ENCODE measurements at regions of chr4 and their contacts with region 1.

Region 1: GRCh38 chr4:158768555-158769174 is at the start of gene FNIP2:
- DNase-seq: peak; percentile 92
- H3K4me3 ChIP-seq: peak within 1 kb of the TSS; percentile 83 to 91 (median 90)
- H3K27ac ChIP-seq: peak within 1 kb of the TSS; percentile 90 to 93 (median 92)
- H3K4me1 ChIP-seq: peaks cover 0 to 44% (median 25%) of the 10 kb centered on the region in 4 donors
- H3K27me3 ChIP-seq: no peaks in the 10 kb centered on the region
- CTCF ChIP-seq: no peak
- EP300 ChIP-seq: no peak
- POLR2A ChIP-seq: peak in 1 of 2 donors; percentile 17
- total RNA-seq, gene FNIP2: 35.2 to 38.9 (median 36.5) TPM

Region 2: DNA sequence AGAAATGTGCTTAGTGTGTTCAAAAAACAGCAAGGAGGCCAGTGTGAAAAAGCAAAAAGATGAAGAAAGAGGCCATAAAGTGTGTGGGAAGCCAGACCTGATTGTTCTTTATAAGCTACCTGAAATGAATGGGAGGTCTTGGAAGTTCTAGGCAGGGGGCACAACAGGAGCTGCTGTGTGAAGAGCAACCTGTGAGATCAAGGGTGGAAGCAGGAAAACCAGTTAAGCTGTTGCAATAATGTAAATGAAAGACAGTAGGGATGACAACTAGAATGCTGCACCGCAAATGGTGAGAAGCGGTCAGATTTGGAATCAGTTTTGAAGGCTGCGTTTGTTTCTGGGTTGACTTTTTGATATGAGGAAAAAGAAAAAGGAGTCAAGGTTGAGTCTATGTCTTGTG is 434.8 kb before region 1 on chr4:
- intact Hi-C with region 1: no loop called
- DNase-seq: no peak
- H3K4me3 ChIP-seq: no peak overlapping the region
- H3K27ac ChIP-seq: no peak overlapping the region
- H3K4me1 ChIP-seq: no peaks in the 10 kb centered on the region
- H3K27me3 ChIP-seq: no peaks in the 10 kb centered on the region
- CTCF ChIP-seq: no peak
- EP300 ChIP-seq: no peak
- POLR2A ChIP-seq: no peak

Region 3: DNA sequence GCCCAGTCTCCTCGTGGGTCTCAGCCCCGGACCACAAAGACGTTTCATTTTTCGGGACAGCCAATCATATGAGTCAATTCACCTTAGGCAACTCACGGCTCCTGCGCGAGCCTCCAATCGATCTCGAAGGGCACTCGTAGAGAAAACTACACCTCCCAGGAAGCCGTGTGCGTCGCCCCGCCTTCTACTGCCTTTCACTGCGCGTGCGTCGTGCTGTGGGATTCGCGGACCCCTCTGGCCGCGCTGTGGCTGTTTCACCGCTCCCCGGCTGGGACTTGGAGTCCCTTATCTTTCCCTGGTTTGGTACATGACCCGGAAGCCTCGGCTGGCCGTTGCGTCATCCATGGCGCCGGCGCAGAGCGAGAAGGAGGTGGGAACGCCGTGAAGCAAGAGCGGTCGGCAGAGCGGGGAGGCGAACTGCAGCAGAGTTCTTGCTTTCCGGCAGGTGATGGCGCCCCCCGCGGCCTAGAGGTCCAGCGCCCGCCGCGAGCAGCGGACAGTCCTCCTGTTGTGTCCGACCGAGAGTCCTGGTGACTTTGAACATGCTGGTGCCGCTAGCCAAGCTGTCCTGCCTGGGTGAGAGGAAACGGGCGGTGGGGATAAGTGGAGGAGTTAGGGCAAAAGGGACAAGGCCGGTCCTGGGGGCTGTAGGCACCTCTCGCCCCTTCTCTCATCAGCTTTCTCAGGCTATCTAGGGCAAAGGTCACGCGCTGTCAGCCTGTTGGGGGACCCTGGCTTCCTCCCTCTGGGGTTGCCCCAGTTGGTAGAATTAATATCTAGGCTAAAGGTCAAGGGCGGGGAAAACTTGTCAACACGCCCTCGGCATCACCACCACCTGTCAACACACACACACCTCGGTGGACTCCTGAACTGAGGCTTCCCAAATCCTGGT is 96.5 kb before region 1 on chr4 and contains the start of gene ETFDH:
- intact Hi-C with region 1: loop called (anchors 5 kb)
- DNase-seq: peak; percentile 100
- H3K4me3 ChIP-seq: peak within 1 kb of the TSS; percentile 71 to 90 (median 84)
- H3K27ac ChIP-seq: peak within 1 kb of the TSS; percentile 88 to 99 (median 96)
- H3K4me1 ChIP-seq: peaks cover 0 to 29% (median 24%) of the 10 kb centered on the region in 4 donors
- H3K27me3 ChIP-seq: no peaks in the 10 kb centered on the region
- CTCF ChIP-seq: peak; percentile 39 to 71 (median 58)
- EP300 ChIP-seq: peak in 1 of 4 donors; percentile 82
- POLR2A ChIP-seq: peak; percentile 43 to 70
- total RNA-seq, gene ETFDH: 30.7 to 49.9 (median 37.7) TPM

Region 4: GRCh38 chr4:158722917-158723793 is 45.5 kb before region 1 on chr4 and contains the start of gene PPID:
- intact Hi-C with region 1: loop called (anchors 2 kb)
- DNase-seq: peak; percentile 88
- H3K4me3 ChIP-seq: peak within 1 kb of the TSS; percentile 61 to 85 (median 72)
- H3K27ac ChIP-seq: peak within 1 kb of the TSS; percentile 82 to 92 (median 89)
- H3K4me1 ChIP-seq: peaks cover 0 to 14% (median 11%) of the 10 kb centered on the region in 4 donors
- H3K27me3 ChIP-seq: no peaks in the 10 kb centered on the region
- CTCF ChIP-seq: no peak
- EP300 ChIP-seq: peak in 1 of 4 donors; percentile 1
- POLR2A ChIP-seq: peak; percentile 68 to 70
- total RNA-seq, gene PPID: 17.8 to 54.8 (median 28.6) TPM

Region 5: DNA sequence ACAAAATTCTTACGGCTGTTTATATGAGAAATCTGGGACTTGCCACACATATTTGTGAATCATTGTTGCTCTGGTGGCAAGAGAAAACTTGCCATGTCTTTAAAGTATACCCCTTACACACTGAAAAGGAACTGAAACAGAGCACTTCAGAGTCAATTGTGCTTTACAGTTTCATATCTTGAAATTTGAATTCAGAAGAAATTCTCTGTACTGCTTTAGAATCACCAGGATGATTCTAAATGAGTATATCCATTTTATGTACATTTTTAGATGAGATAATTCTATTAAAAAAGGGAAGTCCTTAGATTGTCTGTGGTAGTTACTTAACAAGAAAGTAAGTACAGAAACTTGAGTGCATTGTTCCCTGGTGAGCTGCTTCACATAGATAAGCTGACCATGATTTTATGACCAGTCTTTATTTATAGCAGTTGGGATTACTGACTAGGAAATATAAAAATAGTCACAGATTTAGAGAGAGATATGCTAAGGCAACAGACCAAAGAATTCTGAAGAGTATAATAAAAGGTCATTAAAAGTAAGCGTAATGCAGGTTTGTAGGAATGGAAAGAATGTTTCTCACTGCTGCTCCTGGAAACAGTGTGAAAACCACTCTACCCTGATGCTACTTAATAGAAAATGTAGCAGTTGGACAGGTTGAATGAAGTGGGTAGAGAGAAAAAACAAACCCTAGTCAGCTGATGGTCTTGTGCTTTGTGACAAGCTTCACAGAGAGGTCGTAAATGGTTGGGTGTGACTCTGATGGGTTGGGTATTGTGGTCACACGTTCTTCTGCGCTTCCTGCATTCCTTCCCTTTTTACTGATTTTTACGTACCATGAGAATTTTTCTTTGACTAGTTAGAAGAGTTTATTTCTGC is 41.2 kb after region 1 on chr4:
- intact Hi-C with region 1: loop called (anchors 5 kb)
- DNase-seq: no peak
- H3K4me3 ChIP-seq: peak overlapping the region in 1 of 4 donors; percentile 16
- H3K27ac ChIP-seq: peak overlapping the region; percentile 73 to 86 (median 83)
- H3K4me1 ChIP-seq: peaks cover 0 to 85% (median 66%) of the 10 kb centered on the region in 4 donors
- H3K27me3 ChIP-seq: no peaks in the 10 kb centered on the region
- CTCF ChIP-seq: no peak
- EP300 ChIP-seq: peak in 3 of 4 donors; percentile 1 to 79 (median 18)
- POLR2A ChIP-seq: no peak